ENCODE measurements at regions of chr17 and their contacts with region 1.

Region 1: DNA sequence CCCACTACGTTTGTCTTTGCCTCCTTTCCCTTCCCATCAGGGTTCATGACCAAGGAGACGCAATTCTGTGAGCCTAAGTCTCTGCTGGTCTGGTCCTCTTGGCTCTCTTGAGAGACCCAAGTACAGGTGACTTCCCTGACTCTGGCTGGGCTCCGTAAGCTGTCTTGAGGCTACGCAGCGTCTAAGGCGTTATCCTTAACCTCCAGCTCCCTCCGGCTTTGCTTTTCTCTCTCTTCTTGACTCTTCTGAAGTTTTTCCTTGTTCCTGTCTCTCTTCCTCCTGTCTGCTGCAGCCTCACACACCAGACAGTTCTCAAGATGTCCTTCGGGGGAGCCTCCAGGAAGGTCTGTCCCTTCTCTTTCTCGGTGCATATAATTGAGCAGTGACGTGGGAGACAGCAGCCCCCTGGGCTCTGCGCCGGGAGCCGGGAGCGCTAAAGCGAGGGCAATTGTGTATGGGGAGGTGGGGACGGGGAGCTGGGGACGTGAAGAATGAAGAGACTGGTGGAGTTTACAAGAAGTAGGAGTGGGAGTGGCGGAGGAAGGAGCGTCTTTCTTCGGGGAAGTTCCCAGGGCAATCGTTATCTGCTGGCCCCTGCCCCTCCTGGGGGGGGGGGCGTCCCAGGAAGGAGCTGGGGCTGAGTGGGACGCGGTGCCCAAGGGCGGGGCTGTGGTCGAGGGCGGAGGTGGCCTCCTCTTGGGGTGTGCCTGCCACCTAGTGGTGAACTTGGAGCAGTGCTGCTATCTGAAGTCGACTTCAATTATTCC is 6.9 kb upstream of the PIRT start:
- DNase-seq: peak; percentile 74 to 81 (median 79)
- H3K4me3 ChIP-seq: peak overlapping the region; percentile 39
- H3K27ac ChIP-seq: no peak overlapping the region
- H3K4me1 ChIP-seq: peaks cover 4% of the 10 kb centered on the region
- H3K27me3 ChIP-seq: no peaks in the 10 kb centered on the region
- CTCF ChIP-seq: peak; percentile 87 to 97 (median 93)
- EP300 ChIP-seq: no peak
- POLR2A ChIP-seq: no peak

Region 2: DNA sequence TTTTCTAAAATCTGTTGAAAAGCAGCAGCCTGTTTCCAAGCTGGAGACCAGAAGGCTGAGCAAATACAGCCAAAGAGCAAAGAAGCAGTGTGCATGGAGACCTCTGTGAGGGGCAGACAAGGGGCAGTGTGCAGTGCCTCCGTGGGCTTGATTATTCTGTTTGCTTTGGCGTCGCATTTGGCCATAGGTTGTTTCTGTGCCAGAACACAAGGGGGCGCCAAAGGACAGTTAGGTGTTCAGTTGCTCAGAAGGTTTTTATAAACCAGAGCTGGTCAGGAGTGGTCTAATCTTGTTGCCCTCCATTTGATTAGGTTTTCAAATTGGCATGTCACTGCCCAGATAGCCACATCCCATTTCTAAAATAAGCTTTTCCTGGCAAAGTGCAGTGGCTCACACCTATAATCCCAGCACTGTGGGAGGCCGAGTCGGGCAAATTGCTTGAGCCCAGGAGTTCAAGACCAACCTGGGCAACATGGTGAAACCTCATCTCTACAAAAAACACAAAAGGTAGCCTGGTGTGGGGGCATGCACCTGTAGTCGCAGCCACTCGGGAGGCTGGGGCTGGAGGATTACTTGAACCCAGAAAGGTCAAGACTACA is 198.3 kb before region 1 on chr17:
- intact Hi-C with region 1: loop called in 2 of 4 experiments (anchors 5 to 10 kb)
- DNase-seq: peak; percentile 63 to 78 (median 74)
- H3K4me3 ChIP-seq: no peak overlapping the region
- H3K27ac ChIP-seq: no peak overlapping the region
- H3K4me1 ChIP-seq: no peaks in the 10 kb centered on the region
- H3K27me3 ChIP-seq: no peaks in the 10 kb centered on the region
- CTCF ChIP-seq: peak; percentile 62 to 76 (median 67)
- EP300 ChIP-seq: no peak
- POLR2A ChIP-seq: no peak

Region 3: GRCh38 chr17:10729334-10730193 is 115.2 kb before region 1 on chr17 and contains the start of gene TMEM220:
- intact Hi-C with region 1: loop called in 1 of 4 experiments (anchors 5 kb)
- DNase-seq: peak; percentile 81 to 90 (median 87)
- H3K4me3 ChIP-seq: peak within 1 kb of the TSS; percentile 86
- H3K27ac ChIP-seq: peak within 1 kb of the TSS; percentile 93 to 98
- H3K4me1 ChIP-seq: peaks cover 2% of the 10 kb centered on the region
- H3K27me3 ChIP-seq: no peaks in the 10 kb centered on the region
- CTCF ChIP-seq: peak in 1 of 3 donors; percentile 22
- EP300 ChIP-seq: no peak
- POLR2A ChIP-seq: peak; percentile 72
- total RNA-seq, gene TMEM220: 5.4 to 14.1 (median 9.8) TPM

Region 4: DNA sequence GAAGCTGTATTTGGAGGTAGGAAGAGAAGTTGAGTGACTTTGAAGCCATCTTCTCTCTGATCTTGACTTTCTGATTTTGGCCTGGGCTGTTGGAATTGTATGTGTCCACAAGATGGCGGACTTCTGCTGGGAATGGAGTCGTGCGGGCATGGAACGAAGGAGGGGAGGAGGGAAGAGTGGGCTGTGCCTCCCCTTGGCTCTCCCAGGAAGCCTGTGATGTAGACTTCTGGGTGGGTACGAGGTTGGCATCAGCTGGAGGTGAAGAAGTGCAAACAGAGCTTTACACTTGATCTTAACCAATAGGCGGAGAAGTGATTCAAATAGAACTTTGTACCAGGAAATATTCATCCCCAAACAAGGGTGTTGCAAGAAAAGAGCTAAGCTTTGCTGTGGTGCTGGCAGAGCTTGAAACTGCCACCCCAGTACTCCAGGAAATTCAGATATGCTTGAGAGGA is 107.6 kb before region 1 on chr17:
- intact Hi-C with region 1: loop called (anchors 2 to 5 kb)
- DNase-seq: peak; percentile 44 to 72 (median 61)
- H3K4me3 ChIP-seq: no peak overlapping the region
- H3K27ac ChIP-seq: no peak overlapping the region
- H3K4me1 ChIP-seq: peaks cover 1% of the 10 kb centered on the region
- H3K27me3 ChIP-seq: no peaks in the 10 kb centered on the region
- CTCF ChIP-seq: peak; percentile 61 to 67 (median 61)
- EP300 ChIP-seq: no peak
- POLR2A ChIP-seq: no peak

Region 5: DNA sequence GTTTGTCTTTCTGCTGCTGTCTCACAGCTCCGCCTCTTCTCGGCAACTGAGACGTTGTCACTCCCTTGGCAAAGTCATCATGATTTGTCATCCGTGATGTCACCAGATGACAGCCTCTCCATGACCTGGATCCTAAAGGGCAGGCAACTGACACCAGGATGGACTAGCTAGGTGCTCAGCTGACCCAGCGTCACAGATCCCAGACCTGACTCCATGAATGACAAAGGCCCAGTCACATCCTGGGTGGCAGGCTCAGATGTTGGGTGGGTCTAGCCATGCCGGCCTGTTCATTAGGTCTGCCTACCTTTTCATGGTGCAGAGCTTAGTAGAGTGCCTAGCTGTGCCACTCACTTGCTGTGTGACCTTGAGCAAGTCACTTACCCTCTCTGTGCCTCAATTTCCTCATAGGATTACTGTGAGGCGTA is 37.1 kb before region 1 on chr17:
- intact Hi-C with region 1: no loop called
- DNase-seq: no peak
- H3K4me3 ChIP-seq: no peak overlapping the region
- H3K27ac ChIP-seq: no peak overlapping the region
- H3K4me1 ChIP-seq: no peaks in the 10 kb centered on the region
- H3K27me3 ChIP-seq: no peaks in the 10 kb centered on the region
- CTCF ChIP-seq: no peak
- EP300 ChIP-seq: no peak
- POLR2A ChIP-seq: no peak

Region 6: DNA sequence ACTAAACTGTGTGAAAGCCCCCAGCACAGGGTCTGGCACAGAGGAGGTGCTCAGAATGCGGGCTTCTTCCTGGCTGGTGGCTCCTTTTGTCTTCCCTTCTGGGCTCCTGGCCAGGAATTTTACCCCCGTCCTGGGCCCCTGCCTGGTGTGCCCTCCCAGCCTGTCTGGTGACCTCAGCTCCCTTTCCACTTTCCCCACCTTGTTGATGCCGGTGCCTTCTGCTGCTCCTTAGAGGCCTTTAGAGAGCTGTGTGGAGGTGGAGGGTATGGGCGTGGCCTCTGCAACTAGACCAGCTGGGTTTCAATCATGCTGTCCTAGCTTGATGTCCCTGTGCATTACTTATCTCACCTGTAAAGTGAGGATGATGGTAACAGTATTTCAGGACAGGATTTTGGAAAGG is 23.7 kb before region 1 on chr17:
- intact Hi-C with region 1: loop called in 1 of 4 experiments (anchors 1 kb)
- DNase-seq: no peak
- H3K4me3 ChIP-seq: no peak overlapping the region
- H3K27ac ChIP-seq: no peak overlapping the region
- H3K4me1 ChIP-seq: peaks cover 16% of the 10 kb centered on the region
- H3K27me3 ChIP-seq: no peaks in the 10 kb centered on the region
- CTCF ChIP-seq: no peak
- EP300 ChIP-seq: no peak
- POLR2A ChIP-seq: no peak

Region 7: DNA sequence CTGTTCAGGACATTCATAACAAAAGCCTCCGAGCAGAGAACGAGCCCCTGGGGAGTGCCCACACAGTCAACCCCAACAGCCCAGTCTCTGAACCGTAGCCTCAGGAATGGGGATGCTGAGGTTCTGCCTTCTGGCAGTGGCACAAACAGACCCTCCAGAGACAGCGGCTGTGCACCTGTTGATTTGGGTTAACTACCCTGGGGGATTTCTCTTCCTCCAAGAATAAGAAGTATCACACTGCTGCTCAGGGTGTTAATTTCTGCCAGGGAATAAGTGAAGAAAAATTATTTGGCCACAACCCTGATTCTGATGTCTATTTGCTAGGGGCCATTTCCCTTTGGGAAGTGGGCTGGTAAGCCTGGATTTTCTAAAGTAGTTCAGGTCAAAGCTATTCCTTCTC is 44.1 kb after region 1 on chr17:
- intact Hi-C with region 1: no loop called
- DNase-seq: no peak
- H3K4me3 ChIP-seq: no peak overlapping the region
- H3K27ac ChIP-seq: no peak overlapping the region
- H3K4me1 ChIP-seq: no peaks in the 10 kb centered on the region
- H3K27me3 ChIP-seq: no peaks in the 10 kb centered on the region
- CTCF ChIP-seq: no peak
- EP300 ChIP-seq: no peak
- POLR2A ChIP-seq: no peak

Region 8: GRCh38 chr17:10944819-10945218 is 100.0 kb after region 1 on chr17:
- intact Hi-C with region 1: no loop called
- DNase-seq: no peak
- H3K4me3 ChIP-seq: no peak overlapping the region
- H3K27ac ChIP-seq: no peak overlapping the region
- H3K4me1 ChIP-seq: no peaks in the 10 kb centered on the region
- H3K27me3 ChIP-seq: no peaks in the 10 kb centered on the region
- CTCF ChIP-seq: no peak
- EP300 ChIP-seq: no peak
- POLR2A ChIP-seq: no peak

Measured in ovary (tissue), 10 donors.